MCF 10A (cell line): ENCODE measurements at regions of chr7 and their contacts with region 1.

Region 1: GRCh38 chr7:73667344-73668102 is at the start of gene VPS37D:
- DNase-seq: peak; percentile 88
- H3K4me3 Mint-ChIP-seq: peak within 1 kb of the TSS; percentile 67
- H3K27ac Mint-ChIP-seq: no peak within 1 kb of the TSS
- H3K4me1 Mint-ChIP-seq: peaks cover 15% of the 10 kb centered on the region
- H3K27me3 Mint-ChIP-seq: no peaks in the 10 kb centered on the region
- CTCF ChIP-seq: peak; percentile 95
- total RNA-seq, gene VPS37D: 0.44 and 1.3 TPM in 2 replicates

Region 2: GRCh38 chr7:73308665-73309214 is 358.8 kb before region 1 on chr7 and contains the start of gene NSUN5:
- CTCF ChIA-PET with region 1: no interaction called
- POLR2A ChIA-PET with region 1: no interaction called
- intact Hi-C with region 1: no loop called
- DNase-seq: peak; percentile 79
- H3K4me3 Mint-ChIP-seq: peak within 1 kb of the TSS; percentile 95
- H3K27ac Mint-ChIP-seq: peak within 1 kb of the TSS; percentile 87
- H3K4me1 Mint-ChIP-seq: peaks cover 20% of the 10 kb centered on the region
- H3K27me3 Mint-ChIP-seq: no peaks in the 10 kb centered on the region
- CTCF ChIP-seq: no peak
- total RNA-seq, gene NSUN5: 42.2 and 52.9 TPM in 2 replicates

Region 3: DNA sequence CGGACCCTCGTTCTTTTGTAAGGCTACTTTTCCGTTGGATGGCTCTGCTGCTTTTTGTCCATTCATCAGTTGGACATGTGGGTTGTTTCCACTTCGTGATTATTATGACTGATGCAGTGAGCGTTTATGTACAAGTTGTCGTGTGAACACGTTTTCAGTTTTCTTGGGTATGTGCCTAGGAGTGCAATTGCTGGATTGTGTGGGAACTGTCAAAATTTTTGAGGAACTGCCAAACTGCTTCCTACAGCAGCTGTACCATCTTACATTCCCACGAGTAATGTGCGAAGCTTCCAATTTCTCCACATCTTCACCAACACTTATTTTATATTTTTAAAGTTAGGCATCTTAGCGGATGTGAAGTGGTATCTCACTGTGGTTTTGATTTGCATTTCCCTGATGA is 329.2 kb before region 1 on chr7:
- CTCF ChIA-PET with region 1: no interaction called
- POLR2A ChIA-PET with region 1: no interaction called
- intact Hi-C with region 1: no loop called
- DNase-seq: no peak
- H3K4me3 Mint-ChIP-seq: no peak overlapping the region
- H3K27ac Mint-ChIP-seq: no peak overlapping the region
- H3K4me1 Mint-ChIP-seq: peaks cover 9% of the 10 kb centered on the region
- H3K27me3 Mint-ChIP-seq: no peaks in the 10 kb centered on the region
- CTCF ChIP-seq: no peak

Region 4: DNA sequence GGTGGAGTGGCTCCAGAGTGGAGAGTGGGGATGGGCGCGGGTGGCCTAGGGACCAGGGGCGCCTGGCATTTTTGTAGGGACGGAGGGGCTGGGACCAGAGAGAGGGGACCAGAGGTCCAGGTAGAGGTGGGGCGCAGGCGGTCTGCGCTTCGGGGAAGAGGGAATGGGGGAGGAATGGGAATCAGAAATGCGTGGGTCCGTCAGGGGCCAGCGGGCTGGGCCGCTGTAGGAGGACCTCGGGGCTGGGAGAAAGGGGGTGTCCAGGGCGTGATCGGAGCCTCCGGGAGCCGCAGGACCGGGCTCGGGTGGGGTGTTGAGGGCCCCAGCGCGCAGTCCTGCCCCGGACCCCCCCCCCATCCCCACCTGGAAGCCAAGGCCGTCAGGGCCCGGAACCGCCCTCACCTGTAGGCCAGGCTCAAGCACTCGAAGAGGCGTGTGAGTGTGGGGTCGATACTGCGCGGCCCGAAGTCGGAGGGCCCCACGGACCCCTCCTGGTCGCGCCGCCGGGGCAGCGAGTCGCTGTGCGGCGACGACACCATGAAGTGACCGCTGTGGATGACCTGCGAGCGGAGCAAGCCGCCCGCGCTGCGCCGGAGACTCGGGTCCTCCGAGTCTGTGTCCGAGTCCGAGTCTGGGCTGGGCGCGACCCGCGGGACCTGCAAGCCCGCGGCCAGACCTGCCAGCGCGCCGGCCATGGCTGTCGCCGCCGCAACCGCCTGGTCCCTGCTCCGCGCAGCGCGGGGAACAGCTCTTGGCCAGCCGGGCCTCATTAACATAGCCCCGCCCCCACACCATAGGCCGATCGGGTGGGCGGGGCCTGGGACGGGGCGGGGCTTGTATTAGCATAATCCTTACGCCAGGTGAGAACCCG is 43.5 kb before region 1 on chr7 and contains the start of gene MLXIPL:
- CTCF ChIA-PET with region 1: interaction called, 10 read pairs
- POLR2A ChIA-PET with region 1: no interaction called
- intact Hi-C with region 1: loop called (anchors 5 kb)
- DNase-seq: peak; percentile 66
- H3K4me3 Mint-ChIP-seq: peak within 1 kb of the TSS; percentile 57
- H3K27ac Mint-ChIP-seq: no peak within 1 kb of the TSS
- H3K4me1 Mint-ChIP-seq: no peaks in the 10 kb centered on the region
- H3K27me3 Mint-ChIP-seq: peaks cover 5% of the 10 kb centered on the region
- CTCF ChIP-seq: no peak
- total RNA-seq, gene MLXIPL: 1.5 TPM in 1 of 2 replicates, not detected in the other

Region 5: GRCh38 chr7:73690646-73691045 is 23.1 kb after region 1 on chr7:
- CTCF ChIA-PET with region 1: no interaction called
- POLR2A ChIA-PET with region 1: no interaction called
- intact Hi-C with region 1: no loop called
- DNase-seq: no peak
- H3K4me3 Mint-ChIP-seq: no peak overlapping the region
- H3K27ac Mint-ChIP-seq: no peak overlapping the region
- H3K4me1 Mint-ChIP-seq: no peaks in the 10 kb centered on the region
- H3K27me3 Mint-ChIP-seq: no peaks in the 10 kb centered on the region
- CTCF ChIP-seq: no peak

Region 6: DNA sequence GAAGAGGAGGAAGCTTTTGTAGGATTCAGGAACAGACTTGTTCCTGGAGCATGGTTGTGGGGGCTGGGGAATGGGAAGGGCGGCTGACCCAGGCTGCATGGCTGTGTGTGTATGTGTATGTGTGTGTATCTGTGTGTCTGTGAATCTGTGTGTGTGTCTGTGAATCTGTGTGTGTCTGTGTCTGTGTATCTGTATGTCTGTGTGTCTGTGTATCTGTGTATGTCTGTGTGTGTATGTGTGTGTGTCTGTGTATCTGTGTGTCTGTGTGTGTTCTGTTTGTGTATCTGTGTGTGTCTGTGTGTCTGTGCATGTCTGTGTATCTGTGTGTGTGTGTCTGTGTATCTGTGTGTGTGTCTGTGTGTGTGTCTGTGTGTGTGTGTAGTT is 58.6 kb after region 1 on chr7:
- CTCF ChIA-PET with region 1: interaction called, 4 read pairs
- POLR2A ChIA-PET with region 1: no interaction called
- intact Hi-C with region 1: loop called (anchors 5 kb)
- DNase-seq: no peak
- H3K4me3 Mint-ChIP-seq: no peak overlapping the region
- H3K27ac Mint-ChIP-seq: no peak overlapping the region
- H3K4me1 Mint-ChIP-seq: peaks cover 9% of the 10 kb centered on the region
- H3K27me3 Mint-ChIP-seq: no peaks in the 10 kb centered on the region
- CTCF ChIP-seq: no peak